ENCODE measurements at regions of chr19 and their contacts with region 1.

Region 1: GRCh38 chr19:45657520-45658167 is 10.4 kb upstream of the GIPR start:
- DNase-seq: no peak

Region 2: GRCh38 chr19:45615795-45616708 is 41.6 kb before region 1 on chr19:
- intact Hi-C with region 1: loop called in 1 of 2 experiments (anchors 1 kb)
- DNase-seq: peak; percentile 91